Ascending aorta (tissue), 2 donors: ENCODE measurements at regions of chr3 and their contacts with region 1.

Region 1: GRCh38 chr3:46845791-46846623 is 17.2 kb downstream of the MYL3 start:
- DNase-seq: peak; percentile 21 to 84
- H3K4me3 ChIP-seq: peak overlapping the region; percentile 48 to 70
- H3K27ac ChIP-seq: peak overlapping the region; percentile 59 to 72
- H3K4me1 ChIP-seq: peaks cover 11 to 12% of the 10 kb centered on the region in 2 donors
- H3K27me3 ChIP-seq: no peaks in the 10 kb centered on the region
- CTCF ChIP-seq: peak; percentile 38 to 69 (median 46)

Region 2: DNA sequence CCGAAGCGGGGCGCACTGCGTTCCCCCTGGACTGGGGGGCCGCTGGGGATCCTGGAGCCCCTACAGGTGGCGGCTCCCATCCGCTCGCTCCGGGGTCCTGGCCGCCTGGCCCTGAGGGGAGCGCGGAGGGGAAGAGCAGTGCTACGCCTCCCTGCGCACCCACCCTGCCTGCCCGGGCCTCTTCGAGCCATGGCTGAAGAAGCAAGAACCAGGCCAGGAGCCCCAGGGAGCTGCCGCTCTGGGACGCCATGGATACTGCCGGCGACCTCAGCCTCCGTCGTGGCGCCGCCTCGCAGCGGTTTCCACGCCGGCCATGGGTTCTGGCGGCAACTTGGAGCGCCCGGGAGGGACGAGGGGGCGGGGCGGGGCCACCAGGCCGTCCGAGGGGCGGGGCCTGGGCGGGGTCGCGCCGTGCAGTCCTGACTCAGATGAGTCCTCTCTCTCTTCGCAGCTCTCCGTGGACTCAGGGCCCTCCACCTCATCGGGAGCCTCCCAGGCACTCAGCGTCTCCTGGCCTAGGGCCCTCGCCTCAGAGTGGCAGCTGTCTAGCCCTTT is 33.7 kb before region 1 on chr3:
- intact Hi-C with region 1: loop called (anchors 2 kb)
- DNase-seq: peak in 1 of 2 donors; percentile 77
- H3K4me3 ChIP-seq: peak overlapping the region; percentile 48 to 60
- H3K27ac ChIP-seq: no peak overlapping the region
- H3K4me1 ChIP-seq: peaks cover 0 to 4% of the 10 kb centered on the region in 2 donors
- H3K27me3 ChIP-seq: no peaks in the 10 kb centered on the region
- CTCF ChIP-seq: no peak

Region 3: GRCh38 chr3:46878789-46879436 is 32.9 kb after region 1 on chr3:
- intact Hi-C with region 1: no loop called
- DNase-seq: no peak
- H3K4me3 ChIP-seq: no peak overlapping the region
- H3K27ac ChIP-seq: peak overlapping the region in 1 of 2 donors; percentile 21
- H3K4me1 ChIP-seq: peaks cover 16 to 22% of the 10 kb centered on the region in 2 donors
- H3K27me3 ChIP-seq: no peaks in the 10 kb centered on the region
- CTCF ChIP-seq: no peak

Region 4: DNA sequence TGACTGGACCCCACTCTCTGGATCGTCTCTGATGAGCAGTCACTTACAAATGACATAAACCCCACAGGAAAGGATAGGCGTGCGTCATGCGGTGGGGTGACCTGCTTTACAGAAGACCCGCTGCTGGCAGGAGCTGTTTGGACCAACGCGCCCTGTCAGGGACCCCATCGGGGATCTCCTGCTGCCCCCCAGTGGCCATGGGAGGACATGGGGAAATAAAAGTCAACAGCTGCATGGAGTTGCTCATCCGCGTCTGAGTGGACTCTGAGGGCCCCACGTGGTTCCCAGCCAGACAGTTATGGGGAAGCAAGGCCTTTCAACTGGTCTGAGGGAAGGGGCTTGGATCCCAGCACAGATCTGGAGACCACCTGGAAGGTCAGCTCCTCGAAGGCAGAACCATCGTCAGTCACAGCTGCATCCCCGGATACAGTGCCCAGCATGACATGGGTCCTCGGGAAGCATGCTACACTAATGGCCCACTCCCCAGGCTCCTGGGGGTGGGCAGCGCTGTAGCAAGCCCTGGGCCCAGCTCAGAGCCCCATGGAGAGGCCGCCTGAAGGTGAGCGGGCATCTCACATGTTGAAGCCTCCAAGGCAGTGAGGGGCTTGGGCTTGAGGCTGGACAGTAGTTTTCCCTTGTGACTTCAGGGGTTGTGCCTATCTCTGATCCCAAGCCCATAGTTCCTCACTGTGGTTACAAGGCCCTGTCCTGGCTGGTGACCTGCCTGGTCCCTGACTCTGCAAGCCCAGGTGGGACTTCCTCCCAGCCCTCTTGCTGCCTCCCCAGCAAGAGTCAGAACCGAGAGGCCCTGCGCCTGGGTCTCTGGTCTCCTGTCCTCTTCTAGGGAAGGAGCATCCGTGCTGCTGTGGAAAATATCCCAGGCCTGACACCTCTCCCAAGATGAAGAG is 63.8 kb after region 1 on chr3:
- intact Hi-C with region 1: loop called (anchors 1 kb)
- DNase-seq: peak; percentile 56 to 92
- H3K4me3 ChIP-seq: peak overlapping the region in 1 of 2 donors; percentile 19
- H3K27ac ChIP-seq: no peak overlapping the region
- H3K4me1 ChIP-seq: peaks cover 14 to 21% of the 10 kb centered on the region in 2 donors
- H3K27me3 ChIP-seq: no peaks in the 10 kb centered on the region
- CTCF ChIP-seq: peak; percentile 83 to 93 (median 88)

Region 5: DNA sequence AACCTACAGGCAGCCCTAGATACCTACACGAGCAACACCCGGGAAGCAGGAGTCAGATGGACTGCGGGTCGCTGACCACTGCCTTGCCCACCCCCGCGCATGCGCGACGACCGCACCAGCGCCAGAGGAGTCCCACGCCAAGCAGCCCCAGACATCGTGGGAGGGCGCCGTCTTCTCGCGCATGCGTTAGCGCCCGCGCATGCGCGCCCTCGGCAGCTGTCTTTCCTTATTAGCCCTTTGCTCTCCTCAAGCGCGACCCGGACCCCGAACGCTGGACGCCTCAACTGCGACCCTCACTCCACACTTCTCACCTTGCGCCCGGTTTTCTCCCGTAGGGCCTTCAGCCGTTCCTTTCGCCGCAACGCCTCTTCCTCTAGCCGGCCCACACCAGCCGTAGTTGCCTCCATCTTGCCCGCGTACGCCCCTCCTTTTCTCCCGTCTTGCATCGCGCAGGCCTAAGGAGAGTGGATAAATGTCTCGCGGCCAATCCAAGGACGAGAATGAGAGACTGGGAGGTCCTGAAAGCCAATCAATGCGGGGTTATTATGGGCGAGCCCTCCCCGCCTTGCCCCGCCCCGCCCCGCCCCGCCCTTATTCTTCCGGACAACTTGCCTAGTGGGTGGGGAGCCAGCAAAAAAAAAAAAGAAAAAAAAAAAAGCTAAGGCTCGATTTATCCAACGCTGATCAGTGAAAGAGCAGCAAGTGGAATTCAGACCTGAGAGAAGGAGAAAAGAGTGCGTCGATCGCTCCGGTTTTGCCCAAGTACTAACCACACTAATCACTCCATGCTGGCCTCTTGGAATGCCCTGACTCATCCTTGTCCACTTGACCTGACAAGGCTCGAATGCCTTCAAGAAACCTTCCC is 130.6 kb after region 1 on chr3 and contains the start of gene CCDC12:
- intact Hi-C with region 1: loop called (anchors 10 kb)
- DNase-seq: peak; percentile 94 to 98
- H3K4me3 ChIP-seq: peak within 1 kb of the TSS; percentile 60 to 83
- H3K27ac ChIP-seq: peak within 1 kb of the TSS; percentile 84 to 90
- H3K4me1 ChIP-seq: peaks cover 23 to 29% of the 10 kb centered on the region in 2 donors
- H3K27me3 ChIP-seq: no peaks in the 10 kb centered on the region
- CTCF ChIP-seq: no peak
- total RNA-seq, gene CCDC12: 34.3 TPM